Breast epithelium (tissue), 4 donors: ENCODE measurements at regions of chr4 and their contacts with region 1.

Region 1: DNA sequence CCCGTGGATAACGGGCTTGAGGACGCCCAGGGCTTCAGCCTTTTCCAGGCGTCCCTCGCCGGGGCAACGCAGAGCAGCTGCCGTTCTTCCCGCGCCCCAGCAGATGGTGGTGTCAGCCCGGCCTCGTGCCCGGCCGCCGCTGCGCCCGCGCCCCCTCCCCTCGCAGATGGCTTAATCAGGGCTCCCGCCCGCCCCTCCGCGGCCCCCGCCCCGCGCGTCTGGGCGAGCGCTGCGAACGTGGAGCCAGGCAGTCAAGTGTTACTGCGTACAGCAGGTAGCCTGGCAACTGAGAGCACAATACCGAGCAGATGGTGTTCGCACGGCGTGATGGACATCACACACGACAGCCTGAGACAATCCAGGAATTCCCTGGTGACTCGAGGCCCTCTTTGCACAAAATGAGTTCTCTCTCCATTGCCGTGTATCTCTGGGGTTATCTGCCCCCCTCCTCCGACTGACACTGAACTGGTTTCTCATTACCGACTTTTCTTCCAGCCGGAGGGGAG is 69.3 kb downstream of the MGST2 start:
- DNase-seq: peak; percentile 80 to 85
- H3K4me3 ChIP-seq: peak overlapping the region; percentile 45 to 75 (median 58)
- H3K27ac ChIP-seq: peak overlapping the region; percentile 88 to 95
- H3K4me1 ChIP-seq: no peaks in the 10 kb centered on the region
- H3K27me3 ChIP-seq: no peaks in the 10 kb centered on the region
- CTCF ChIP-seq: peak; percentile 68 to 78 (median 74)
- POLR2A ChIP-seq: no peak

Region 2: DNA sequence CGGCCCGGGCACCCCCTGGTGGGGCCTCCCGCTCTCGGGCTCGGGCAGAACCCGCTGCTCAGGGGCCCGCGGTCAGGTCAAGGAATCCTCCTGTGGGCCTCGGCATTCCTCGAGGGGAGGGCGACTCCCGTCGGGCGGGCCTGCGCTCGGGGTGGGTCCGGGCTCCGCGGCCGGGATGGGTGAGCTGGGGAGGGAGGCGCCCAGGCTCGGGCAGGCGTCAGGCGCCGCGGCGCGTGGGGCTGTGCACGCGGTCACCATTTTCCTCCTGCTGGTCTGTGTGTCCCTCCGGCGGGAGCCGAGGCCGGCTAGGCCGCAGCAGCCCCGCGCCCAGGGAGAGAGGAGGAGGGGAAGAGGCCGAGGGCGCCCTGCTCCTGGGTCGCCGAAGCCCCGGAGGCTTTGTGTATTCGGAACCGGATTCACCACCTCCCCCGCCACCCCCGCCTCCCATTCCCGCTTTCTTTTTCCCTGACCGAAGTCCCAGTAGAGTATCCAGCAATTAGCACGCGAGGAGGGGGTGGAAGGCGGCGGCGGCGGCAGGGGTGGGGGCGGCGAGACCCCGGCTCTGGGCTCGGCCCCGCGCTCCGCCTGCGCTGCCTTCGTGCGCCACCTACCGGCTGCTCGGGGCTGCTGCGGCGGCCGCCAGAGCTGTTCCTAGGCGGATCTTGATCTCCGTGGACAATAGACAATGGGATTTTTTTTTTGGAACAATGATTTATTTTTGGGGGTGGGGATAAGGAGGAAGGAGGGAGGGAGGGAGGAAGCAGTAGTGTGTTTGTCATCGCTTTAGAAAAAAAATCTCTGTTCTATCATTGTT is 518.0 kb after region 1 on chr4:
- intact Hi-C with region 1: loop called (anchors 10 kb)
- DNase-seq: peak; percentile 58 to 72
- H3K4me3 ChIP-seq: peak overlapping the region; percentile 62 to 93 (median 73)
- H3K27ac ChIP-seq: peak overlapping the region; percentile 96 to 99
- H3K4me1 ChIP-seq: peaks cover 0 to 4% of the 10 kb centered on the region in 2 donors
- H3K27me3 ChIP-seq: no peaks in the 10 kb centered on the region
- CTCF ChIP-seq: peak; percentile 60 to 84 (median 67)
- POLR2A ChIP-seq: no peak